Calu3 (cell line): ENCODE measurements at regions of chr5 and their contacts with region 1.

Region 1: DNA sequence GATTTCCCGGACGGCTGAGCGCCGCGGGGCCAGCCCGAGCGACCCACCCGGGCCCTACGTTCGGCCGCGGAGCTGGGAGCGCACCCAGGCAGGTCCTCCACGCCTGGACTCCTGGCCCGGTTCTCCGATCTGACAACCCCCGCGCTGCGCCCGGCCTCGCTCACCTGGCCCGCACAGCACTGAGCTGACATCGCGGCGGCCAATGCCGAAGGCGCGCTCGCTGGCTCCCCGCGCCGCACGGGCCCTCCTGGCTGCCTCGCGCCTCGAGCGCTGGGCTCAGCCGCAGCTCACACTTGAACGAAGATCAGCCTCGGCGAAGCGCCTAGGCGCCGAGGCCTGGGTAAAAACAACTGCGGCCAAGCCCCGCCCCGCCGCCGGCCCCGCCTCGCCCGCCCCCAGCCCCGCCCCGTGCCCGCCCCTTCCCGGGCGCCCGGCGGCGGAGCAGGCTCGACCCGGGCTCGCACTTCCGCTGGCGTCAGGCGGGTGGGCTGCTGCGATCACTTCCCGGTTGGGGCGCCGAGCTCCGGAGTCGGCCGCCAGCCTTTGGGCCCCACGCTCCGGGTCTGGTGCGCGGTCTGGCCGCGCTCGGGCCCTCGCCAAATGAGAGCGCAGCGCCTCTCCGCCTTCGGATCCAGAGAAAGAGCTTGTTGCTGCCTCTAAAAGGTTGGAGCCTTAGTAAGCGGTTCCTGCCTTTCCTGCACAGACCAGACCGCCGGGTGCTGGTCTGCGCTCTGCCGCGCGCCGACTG is at the start of gene SERINC5:
- DNase-seq: peak; percentile 88
- H3K4me3 Mint-ChIP-seq: peak within 1 kb of the TSS; percentile 95
- H3K27ac Mint-ChIP-seq: peak within 1 kb of the TSS; percentile 98
- H3K4me1 Mint-ChIP-seq: peaks cover 47% of the 10 kb centered on the region
- H3K27me3 Mint-ChIP-seq: no peaks in the 10 kb centered on the region
- CTCF ChIP-seq: no peak
- total RNA-seq, gene SERINC5: 47.0 and 49.2 TPM in 2 replicates

Region 2: DNA sequence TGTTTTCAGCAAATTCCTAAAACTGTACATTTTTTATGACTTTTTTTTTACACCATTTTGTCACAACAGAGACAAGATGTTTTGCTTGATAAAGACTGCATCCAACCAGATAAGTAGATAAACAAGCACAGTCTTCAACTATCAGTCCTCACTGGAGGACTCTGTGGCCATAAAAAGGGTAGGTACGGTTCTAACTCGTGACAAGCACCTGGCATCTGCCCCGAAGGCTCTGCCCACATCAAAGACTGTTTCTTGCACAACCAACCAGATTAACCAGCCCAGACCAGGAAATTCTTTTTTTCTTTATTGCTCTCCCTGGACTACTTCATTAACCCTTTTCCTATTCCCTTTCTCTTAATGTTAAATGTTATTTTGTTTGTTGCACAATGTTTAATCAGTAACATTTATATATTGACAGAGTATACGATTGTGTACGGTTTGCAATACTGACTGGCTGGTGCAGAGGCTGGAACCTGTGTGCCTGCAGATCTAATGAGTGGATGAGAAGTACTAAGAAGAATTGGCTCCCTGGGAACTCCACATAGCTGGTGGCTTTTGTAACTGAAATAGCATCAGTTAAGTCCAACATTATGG is 74.2 kb before region 1 on chr5:
- CTCF ChIA-PET with region 1: interaction called, 10 read pairs
- intact Hi-C with region 1: loop called (anchors 2 kb)
- DNase-seq: peak; percentile 90
- H3K4me3 Mint-ChIP-seq: peak overlapping the region; percentile 43
- H3K27ac Mint-ChIP-seq: peak overlapping the region; percentile 93
- H3K4me1 Mint-ChIP-seq: peaks cover 66% of the 10 kb centered on the region
- H3K27me3 Mint-ChIP-seq: no peaks in the 10 kb centered on the region
- CTCF ChIP-seq: no peak

Region 3: GRCh38 chr5:80268916-80269315 is 13.0 kb after region 1 on chr5:
- CTCF ChIA-PET with region 1: interaction called, 21 read pairs
- intact Hi-C with region 1: no loop called
- DNase-seq: no peak
- H3K4me3 Mint-ChIP-seq: no peak overlapping the region
- H3K27ac Mint-ChIP-seq: no peak overlapping the region
- H3K4me1 Mint-ChIP-seq: no peaks in the 10 kb centered on the region
- H3K27me3 Mint-ChIP-seq: no peaks in the 10 kb centered on the region
- CTCF ChIP-seq: no peak

Region 4: DNA sequence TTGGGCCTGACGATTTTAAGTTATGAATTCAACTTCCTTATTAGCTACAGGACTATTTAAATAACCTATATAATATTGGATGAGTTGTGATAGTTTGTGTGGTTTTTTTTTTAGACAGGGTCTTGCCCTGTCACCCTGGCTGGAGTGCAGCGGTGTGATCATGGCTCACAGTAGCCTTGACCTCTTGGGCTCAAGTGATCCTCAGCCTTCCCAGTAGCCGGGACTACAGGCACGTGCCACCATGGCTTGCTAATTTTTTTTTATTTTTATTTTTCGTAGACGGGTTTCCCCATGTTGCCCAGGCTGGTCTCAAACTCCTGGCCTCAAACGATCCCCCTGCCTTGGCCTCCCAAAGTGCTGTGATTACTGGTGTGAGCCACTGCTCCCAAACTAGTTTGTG is 81.5 kb after region 1 on chr5:
- CTCF ChIA-PET with region 1: no interaction called
- intact Hi-C with region 1: no loop called
- DNase-seq: no peak
- H3K4me3 Mint-ChIP-seq: no peak overlapping the region
- H3K27ac Mint-ChIP-seq: no peak overlapping the region
- H3K4me1 Mint-ChIP-seq: no peaks in the 10 kb centered on the region
- H3K27me3 Mint-ChIP-seq: peaks cover 15% of the 10 kb centered on the region
- CTCF ChIP-seq: no peak